ENCODE measurements at regions of chr1 and their contacts with region 1.

Region 1: GRCh38 chr1:231103961-231104360 is 57.9 kb upstream of the TRIM67 start:
- DNase-seq: no peak
- H3K4me3 ChIP-seq: no peak overlapping the region
- CTCF ChIP-seq: no peak

Region 2: GRCh38 chr1:231091831-231092301 is 12.1 kb before region 1 on chr1:
- CTCF ChIA-PET with region 1: interaction called, 15 read pairs
- POLR2A ChIA-PET with region 1: interaction called, 4 read pairs
- DNase-seq: no peak
- H3K4me3 ChIP-seq: no peak overlapping the region
- CTCF ChIP-seq: peak; percentile 52